ENCODE measurements at regions of chr21 and their contacts with region 1.

Region 1: GRCh38 chr21:44024887-44025362 is 12.8 kb downstream of the TRAPPC10 start:
- DNase-seq: peak in 7 of 10 donors; percentile 54 to 67 (median 61)
- H3K4me3 ChIP-seq: peak overlapping the region in 8 of 59 donors; percentile 5 to 34 (median 14)
- H3K27ac ChIP-seq: peak overlapping the region in 58 of 59 donors; percentile 5 to 90 (median 78)
- H3K27me3 ChIP-seq: no peaks in the 10 kb centered on the region
- CTCF ChIP-seq: peak in 14 of 56 donors; percentile 4 to 36 (median 18)

Region 2: DNA sequence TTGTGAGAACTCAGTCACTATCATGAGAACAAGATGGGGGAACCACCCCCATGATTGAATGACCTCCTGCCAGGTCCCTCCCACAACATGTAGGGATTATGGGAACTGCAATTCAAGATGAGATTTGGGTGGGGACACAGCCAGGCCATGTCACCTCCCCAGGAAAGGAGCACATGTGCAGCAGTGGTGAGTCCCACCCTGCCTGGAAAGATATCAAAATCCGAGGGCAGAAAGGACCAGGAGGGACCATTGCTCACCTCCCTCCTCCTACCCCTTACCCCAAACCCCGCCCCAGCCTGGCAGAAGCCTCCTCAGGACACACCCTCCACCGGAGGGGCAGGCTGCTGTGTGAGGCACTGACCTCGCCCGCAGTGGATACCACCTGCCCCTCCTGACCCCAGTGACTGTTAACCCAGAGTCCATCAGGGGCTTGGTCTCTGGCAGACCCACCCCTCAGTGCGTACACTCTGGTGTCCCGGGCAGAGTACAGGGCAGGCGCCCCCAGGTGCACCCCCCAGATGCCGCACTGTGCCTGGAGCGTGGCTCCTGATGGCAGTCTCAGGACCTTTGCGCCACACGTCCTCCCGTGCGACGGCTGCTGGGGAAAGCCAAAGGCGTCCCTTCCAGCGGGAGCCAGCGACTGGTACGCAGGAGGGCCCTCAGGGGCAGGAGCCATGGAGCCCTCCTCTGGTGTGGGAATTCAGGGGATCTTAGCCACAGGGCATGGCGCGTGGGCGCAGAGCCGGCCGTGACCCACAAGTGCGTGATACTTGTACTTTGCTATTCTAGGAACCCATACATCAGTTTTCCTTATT is 285.1 kb before region 1 on chr21:
- intact Hi-C with region 1: loop called in 1 of 2 experiments (anchors 5 kb)
- DNase-seq: no peak
- H3K4me3 ChIP-seq: no peak overlapping the region
- H3K27ac ChIP-seq: peak overlapping the region in 51 of 59 donors; percentile 4 to 93 (median 63)
- H3K27me3 ChIP-seq: no peaks in the 10 kb centered on the region
- CTCF ChIP-seq: no peak

Region 3: GRCh38 chr21:43842742-43843141 is 182.2 kb before region 1 on chr21:
- intact Hi-C with region 1: no loop called
- DNase-seq: no peak
- H3K4me3 ChIP-seq: no peak overlapping the region
- H3K27ac ChIP-seq: no peak overlapping the region
- H3K27me3 ChIP-seq: no peaks in the 10 kb centered on the region
- CTCF ChIP-seq: no peak

Region 4: DNA sequence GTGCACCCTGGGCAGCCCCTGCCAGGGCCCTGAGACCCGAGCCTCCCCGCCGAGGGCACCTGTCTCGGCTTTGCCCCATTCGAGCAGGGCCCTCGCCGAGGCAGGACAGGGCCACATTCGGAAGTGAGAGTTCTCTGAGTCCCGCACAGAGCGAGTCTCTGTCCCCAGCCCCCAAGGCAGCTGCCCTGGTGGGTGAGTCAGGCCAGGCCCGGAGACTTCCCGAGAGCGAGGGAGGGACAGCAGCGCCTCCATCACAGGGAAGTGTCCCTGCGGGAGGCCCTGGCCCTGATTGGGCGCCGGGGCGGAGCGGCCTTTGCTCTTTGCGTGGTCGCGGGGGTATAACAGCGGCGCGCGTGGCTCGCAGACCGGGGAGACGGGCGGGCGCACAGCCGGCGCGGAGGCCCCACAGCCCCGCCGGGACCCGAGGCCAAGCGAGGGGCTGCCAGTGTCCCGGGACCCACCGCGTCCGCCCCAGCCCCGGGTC is 260.6 kb after region 1 on chr21 and contains the start of gene AIRE:
- intact Hi-C with region 1: no loop called
- DNase-seq: no peak
- H3K4me3 ChIP-seq: peak within 1 kb of the TSS; percentile 14 to 62 (median 43)
- H3K27ac ChIP-seq: peak within 1 kb of the TSS in 1 of 59 donors; percentile 44
- H3K27me3 ChIP-seq: peaks cover 0 to 26% (median 0%) of the 10 kb centered on the region in 45 donors
- CTCF ChIP-seq: no peak
- total RNA-seq, gene AIRE: 0.62 to 5.4 (median 2.0) TPM

Region 5: GRCh38 chr21:44329086-44329889 is 304.4 kb after region 1 on chr21:
- intact Hi-C with region 1: loop called in 1 of 2 experiments (anchors 10 kb)
- DNase-seq: peak in 3 of 10 donors; percentile 43 to 59 (median 52)
- H3K4me3 ChIP-seq: no peak overlapping the region
- H3K27ac ChIP-seq: peak overlapping the region in 46 of 59 donors; percentile 8 to 83 (median 62)
- H3K27me3 ChIP-seq: no peaks in the 10 kb centered on the region
- CTCF ChIP-seq: peak in 1 of 56 donors; percentile 10